ENCODE measurements at regions of chrX and their contacts with region 1.

Region 1: GRCh38 chrX:53294024-53294648 is 12.8 kb upstream of the IQSEC2 start:
- DNase-seq: peak in 1 of 2 experiments; percentile 32
- ATAC-seq: peak; percentile 39 to 69; a peak in 3 of 6 replicates
- H3K4me3 ChIP-seq: no peak overlapping the region
- H3K27ac ChIP-seq: no peak overlapping the region
- H3K4me1 ChIP-seq: no peaks in the 10 kb centered on the region
- CTCF ChIP-seq: peak; percentile 50
- EP300 ChIP-seq: no peak
- POLR2A ChIP-seq: no peak
- RAD21 ChIP-seq: peak; percentile 39 to 53; a peak in 3 of 5 replicates

Region 2: GRCh38 chrX:53330331-53330730 is 36.2 kb after region 1 on chrX:
- CTCF ChIA-PET with region 1: interaction called, 10 read pairs
- POLR2A ChIA-PET with region 1: no interaction called
- DNase-seq: no peak
- ATAC-seq: no peak
- H3K4me3 ChIP-seq: no peak overlapping the region
- H3K27ac ChIP-seq: no peak overlapping the region
- H3K4me1 ChIP-seq: no peaks in the 10 kb centered on the region
- CTCF ChIP-seq: no peak
- EP300 ChIP-seq: no peak
- POLR2A ChIP-seq: no peak
- RAD21 ChIP-seq: no peak

Measured in A549 (cell line).